ENCODE measurements at regions of chr7 and their contacts with region 1.

Region 1: GRCh38 chr7:21352540-21353387 is 75.1 kb upstream of the SP4 start:
- DNase-seq: no peak
- ATAC-seq: peak; percentile 84
- H3K4me3 Mint-ChIP-seq: peak overlapping the region; percentile 71
- H3K27ac Mint-ChIP-seq: peak overlapping the region; percentile 88
- H3K4me1 Mint-ChIP-seq: peaks cover 58% of the 10 kb centered on the region
- H3K27me3 Mint-ChIP-seq: no peaks in the 10 kb centered on the region
- CTCF ChIP-seq: no peak

Region 2: DNA sequence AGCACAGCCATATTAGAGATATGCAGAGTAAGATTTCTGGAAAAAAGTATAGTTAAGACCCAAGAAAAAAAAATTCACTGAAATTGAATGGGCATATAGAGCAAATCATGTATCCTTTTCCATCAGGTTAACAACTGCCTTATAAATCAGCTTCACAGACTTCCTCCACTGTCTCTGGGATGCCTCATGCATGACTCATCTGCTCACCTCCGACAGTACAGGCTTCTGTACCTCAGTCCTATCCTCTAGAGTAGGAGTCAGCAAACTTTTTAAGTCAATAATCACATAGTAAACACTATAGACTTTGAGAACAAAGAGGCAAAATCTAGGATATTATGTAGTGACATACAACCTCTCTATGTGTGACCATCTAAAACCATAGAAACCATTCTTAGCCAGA is 354.5 kb before region 1 on chr7:
- CTCF ChIA-PET with region 1: no interaction called
- POLR2A ChIA-PET with region 1: no interaction called
- intact Hi-C with region 1: no loop called
- DNase-seq: no peak
- ATAC-seq: no peak
- H3K4me3 Mint-ChIP-seq: no peak overlapping the region
- H3K27ac Mint-ChIP-seq: no peak overlapping the region
- H3K4me1 Mint-ChIP-seq: no peaks in the 10 kb centered on the region
- H3K27me3 Mint-ChIP-seq: no peaks in the 10 kb centered on the region
- CTCF ChIP-seq: no peak

Region 3: GRCh38 chr7:21261627-21262594 is 90.9 kb before region 1 on chr7:
- CTCF ChIA-PET with region 1: interaction called, 7 read pairs
- POLR2A ChIA-PET with region 1: interaction called, 6 read pairs
- intact Hi-C with region 1: loop called (anchors 1 kb)
- DNase-seq: peak; percentile 18
- ATAC-seq: peak; percentile 96
- H3K4me3 Mint-ChIP-seq: no peak overlapping the region
- H3K27ac Mint-ChIP-seq: peak overlapping the region; percentile 6
- H3K4me1 Mint-ChIP-seq: peaks cover 14% of the 10 kb centered on the region
- H3K27me3 Mint-ChIP-seq: no peaks in the 10 kb centered on the region
- CTCF ChIP-seq: no peak

Region 4: DNA sequence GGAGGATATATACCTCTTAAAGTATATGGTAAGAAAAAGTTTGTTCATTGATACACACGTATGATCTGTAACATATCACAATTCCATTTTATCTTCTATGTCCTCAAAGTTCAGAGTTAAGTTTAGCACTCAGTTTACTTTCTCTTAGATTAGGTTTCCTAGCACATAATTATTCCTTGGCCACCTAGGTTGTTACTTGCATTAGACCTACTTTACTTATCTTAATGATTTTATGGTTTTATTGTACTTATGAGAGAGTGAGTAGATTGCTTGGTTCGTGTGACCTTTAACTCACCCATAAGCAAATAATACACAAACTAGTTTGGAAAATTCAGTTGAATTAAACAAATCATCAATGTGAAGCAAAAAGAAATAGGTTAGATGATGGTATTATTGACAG is 41.2 kb after region 1 on chr7:
- CTCF ChIA-PET with region 1: no interaction called
- POLR2A ChIA-PET with region 1: no interaction called
- intact Hi-C with region 1: loop called (anchors 5 kb)
- DNase-seq: no peak
- ATAC-seq: no peak
- H3K4me3 Mint-ChIP-seq: no peak overlapping the region
- H3K27ac Mint-ChIP-seq: no peak overlapping the region
- H3K4me1 Mint-ChIP-seq: no peaks in the 10 kb centered on the region
- H3K27me3 Mint-ChIP-seq: no peaks in the 10 kb centered on the region
- CTCF ChIP-seq: no peak

Region 5: GRCh38 chr7:21966271-21966670 is 613.5 kb after region 1 on chr7:
- CTCF ChIA-PET with region 1: no interaction called
- POLR2A ChIA-PET with region 1: no interaction called
- intact Hi-C with region 1: loop called (anchors 2 kb)
- DNase-seq: peak; percentile 31
- ATAC-seq: peak; percentile 97
- H3K4me3 Mint-ChIP-seq: peak overlapping the region; percentile 66
- H3K27ac Mint-ChIP-seq: peak overlapping the region; percentile 87
- H3K4me1 Mint-ChIP-seq: peaks cover 63% of the 10 kb centered on the region
- H3K27me3 Mint-ChIP-seq: no peaks in the 10 kb centered on the region
- CTCF ChIP-seq: no peak

Measured in activated B cell treated with CpG ODN at 0.5 μM for 24 hours (primary cell).